ENCODE measurements at regions of chr11 and their contacts with region 1.

Region 1: DNA sequence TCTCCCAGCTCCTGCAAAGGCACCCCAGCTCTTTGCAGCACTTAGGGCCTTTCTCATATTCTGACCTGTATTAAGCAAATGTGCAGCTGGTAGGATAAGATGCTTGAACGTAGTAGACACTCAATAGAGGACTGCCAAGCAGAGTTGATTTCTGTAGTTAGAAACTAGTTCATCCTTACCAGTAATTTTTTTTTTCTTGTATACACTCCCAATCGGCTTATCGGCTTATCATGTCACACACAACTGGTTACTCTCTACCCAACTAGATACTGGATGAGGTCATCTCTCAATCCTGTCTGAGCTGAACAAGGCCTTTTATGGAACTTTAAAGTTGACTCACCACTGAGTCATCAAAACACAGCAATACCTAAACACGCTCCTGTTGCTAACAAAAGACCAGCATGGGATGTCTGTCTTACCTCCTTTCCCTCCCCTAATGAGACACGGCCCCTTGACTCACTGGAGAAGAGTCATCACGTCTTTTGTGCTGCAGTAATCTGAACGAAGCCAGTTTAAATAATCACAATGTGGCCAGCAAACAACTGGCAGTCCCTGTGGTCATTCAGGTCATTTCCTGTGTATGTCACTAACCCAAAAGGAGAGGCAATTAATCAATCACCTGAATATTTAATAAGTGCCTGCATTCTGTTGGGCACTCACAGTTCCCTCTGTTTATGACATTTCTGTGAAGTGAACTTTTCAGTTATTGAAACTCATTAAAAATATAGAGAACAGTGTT is 7.5 kb upstream of the WEE1 start:
- DNase-seq: peak in 1 of 2 donors; percentile 94
- H3K4me3 ChIP-seq: no peak overlapping the region
- H3K27ac ChIP-seq: peak overlapping the region; percentile 93 to 96
- H3K4me1 ChIP-seq: peaks cover 23 to 48% of the 10 kb centered on the region in 2 donors
- H3K27me3 ChIP-seq: no peaks in the 10 kb centered on the region
- CTCF ChIP-seq: no peak

Region 2: DNA sequence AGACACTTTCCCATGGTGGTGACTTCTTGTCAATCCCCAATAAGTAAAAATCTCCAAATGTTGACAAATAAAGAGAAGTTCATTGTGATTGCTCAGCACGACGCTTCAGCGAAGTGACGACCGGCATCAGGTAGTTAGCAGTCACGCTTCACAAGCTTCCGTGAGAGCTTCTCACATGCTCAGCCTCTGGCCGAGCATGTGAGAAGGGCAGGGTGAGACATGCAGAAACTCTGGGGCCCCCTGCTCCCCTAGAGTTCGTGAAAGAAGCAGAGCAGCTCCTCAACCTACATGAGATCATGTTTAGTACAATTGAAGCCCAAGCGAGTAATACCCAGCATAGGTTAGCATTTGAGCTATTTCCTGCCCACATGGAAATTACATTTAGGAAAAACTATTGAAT is 628.8 kb before region 1 on chr11:
- intact Hi-C with region 1: no loop called
- DNase-seq: peak in 1 of 2 donors; percentile 39
- H3K4me3 ChIP-seq: no peak overlapping the region
- H3K27ac ChIP-seq: no peak overlapping the region
- H3K4me1 ChIP-seq: no peaks in the 10 kb centered on the region
- H3K27me3 ChIP-seq: no peaks in the 10 kb centered on the region
- CTCF ChIP-seq: no peak

Region 3: GRCh38 chr11:9180784-9181183 is 385.2 kb before region 1 on chr11:
- intact Hi-C with region 1: no loop called
- DNase-seq: no peak
- H3K4me3 ChIP-seq: no peak overlapping the region
- H3K27ac ChIP-seq: peak overlapping the region in 1 of 2 donors; percentile 9
- H3K4me1 ChIP-seq: no peaks in the 10 kb centered on the region
- H3K27me3 ChIP-seq: no peaks in the 10 kb centered on the region
- CTCF ChIP-seq: no peak

Region 4: GRCh38 chr11:9534791-9535781 is 30.9 kb before region 1 on chr11:
- intact Hi-C with region 1: loop called (anchors 2 kb)
- DNase-seq: peak; percentile 19 to 89
- H3K4me3 ChIP-seq: no peak overlapping the region
- H3K27ac ChIP-seq: peak overlapping the region; percentile 50 to 65
- H3K4me1 ChIP-seq: peaks cover 0 to 22% of the 10 kb centered on the region in 2 donors
- H3K27me3 ChIP-seq: no peaks in the 10 kb centered on the region
- CTCF ChIP-seq: peak; percentile 55 to 64 (median 57)

Measured in ascending aorta (tissue), 2 donors.